ENCODE measurements at regions of chr4 and their contacts with region 1.

Region 1: GRCh38 chr4:26701786-26702227 is 117.9 kb downstream of the TBC1D19 start:
- DNase-seq: peak; percentile 18 to 79 (median 50)
- ATAC-seq: peak; percentile 94
- H3K4me3 ChIP-seq: no peak overlapping the region
- H3K27ac ChIP-seq: peak overlapping the region; percentile 27
- H3K4me1 ChIP-seq: peaks cover 0 to 19% of the 10 kb centered on the region in 2 experiments; a peak in 2 of 5 replicates
- H3K27me3 ChIP-seq: no peaks in the 10 kb centered on the region
- CTCF ChIP-seq: no peak
- EP300 ChIP-seq: peak; percentile 89
- POLR2A ChIP-seq: no peak
- RAD21 ChIP-seq: peak in 1 of 2 experiments; percentile 20; a peak in 2 of 4 replicates

Region 2: GRCh38 chr4:26509681-26510333 is 192.0 kb before region 1 on chr4:
- CTCF ChIA-PET with region 1: no interaction called
- POLR2A ChIA-PET with region 1: no interaction called
- in situ Hi-C with region 1: no loop called
- intact Hi-C with region 1: no loop called
- DNase-seq: no peak
- ATAC-seq: no peak
- H3K4me3 ChIP-seq: no peak overlapping the region
- H3K27ac ChIP-seq: no peak overlapping the region
- H3K4me1 ChIP-seq: peaks cover 0 to 4% of the 10 kb centered on the region in 2 experiments; a peak in 2 of 5 replicates
- H3K27me3 ChIP-seq: peaks cover 0 to 9% of the 10 kb centered on the region in 2 experiments; a peak in 2 of 5 replicates
- CTCF ChIP-seq: no peak
- EP300 ChIP-seq: no peak
- POLR2A ChIP-seq: no peak
- RAD21 ChIP-seq: no peak

Region 3: DNA sequence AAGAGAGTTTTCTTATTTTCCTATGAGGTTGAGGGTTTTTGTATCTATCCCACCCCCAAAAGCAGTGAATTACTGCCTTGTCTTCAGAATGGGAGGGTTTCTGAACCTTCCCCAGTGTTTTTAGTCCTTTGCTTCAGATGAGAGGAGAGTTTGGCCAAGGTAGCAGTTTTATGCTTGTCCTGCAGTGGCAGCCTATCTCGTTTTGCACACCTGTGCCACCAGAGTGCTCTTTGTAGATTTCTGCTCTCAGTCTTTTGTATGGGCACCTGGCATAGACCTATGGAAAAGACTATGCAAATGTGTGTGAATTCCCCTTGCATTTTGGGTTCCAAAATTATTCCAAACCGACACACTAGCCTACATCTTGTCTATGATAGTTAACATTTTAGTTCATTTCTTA is 112.1 kb before region 1 on chr4:
- CTCF ChIA-PET with region 1: no interaction called
- POLR2A ChIA-PET with region 1: no interaction called
- in situ Hi-C with region 1: no loop called
- intact Hi-C with region 1: loop called (anchors 5 kb)
- DNase-seq: no peak
- ATAC-seq: peak; percentile 57
- H3K4me3 ChIP-seq: no peak overlapping the region
- H3K27ac ChIP-seq: no peak overlapping the region
- H3K4me1 ChIP-seq: no peaks in the 10 kb centered on the region; a peak in 2 of 5 replicates
- H3K27me3 ChIP-seq: no peaks in the 10 kb centered on the region
- CTCF ChIP-seq: no peak; a peak in 1 of 6 replicates
- EP300 ChIP-seq: no peak
- POLR2A ChIP-seq: no peak
- RAD21 ChIP-seq: no peak